Gastrocnemius medialis (tissue), 4 donors: ENCODE measurements at regions of chr12 and their contacts with region 1.

Region 1: GRCh38 chr12:46372544-46373110 is at the start of gene SLC38A2:
- DNase-seq: peak; percentile 97 to 98
- ATAC-seq: peak; percentile 69 to 71
- H3K4me3 ChIP-seq: peak within 1 kb of the TSS; percentile 68 to 87 (median 80)
- H3K27ac ChIP-seq: peak within 1 kb of the TSS; percentile 93 to 97 (median 95)
- H3K4me1 ChIP-seq: peaks cover 38 to 46% of the 10 kb centered on the region in 2 donors
- H3K27me3 ChIP-seq: no peaks in the 10 kb centered on the region
- CTCF ChIP-seq: no peak
- POLR2A ChIP-seq: peak; percentile 100
- total RNA-seq, gene SLC38A2: 260 to 853 (median 400) TPM

Region 2: GRCh38 chr12:45622210-45622937 is 750.3 kb before region 1 on chr12:
- in situ Hi-C with region 1: no loop called
- intact Hi-C with region 1: no loop called
- DNase-seq: no peak
- ATAC-seq: no peak
- H3K4me3 ChIP-seq: no peak overlapping the region
- H3K27ac ChIP-seq: no peak overlapping the region
- H3K4me1 ChIP-seq: no peaks in the 10 kb centered on the region
- H3K27me3 ChIP-seq: no peaks in the 10 kb centered on the region
- CTCF ChIP-seq: no peak
- POLR2A ChIP-seq: no peak

Region 3: DNA sequence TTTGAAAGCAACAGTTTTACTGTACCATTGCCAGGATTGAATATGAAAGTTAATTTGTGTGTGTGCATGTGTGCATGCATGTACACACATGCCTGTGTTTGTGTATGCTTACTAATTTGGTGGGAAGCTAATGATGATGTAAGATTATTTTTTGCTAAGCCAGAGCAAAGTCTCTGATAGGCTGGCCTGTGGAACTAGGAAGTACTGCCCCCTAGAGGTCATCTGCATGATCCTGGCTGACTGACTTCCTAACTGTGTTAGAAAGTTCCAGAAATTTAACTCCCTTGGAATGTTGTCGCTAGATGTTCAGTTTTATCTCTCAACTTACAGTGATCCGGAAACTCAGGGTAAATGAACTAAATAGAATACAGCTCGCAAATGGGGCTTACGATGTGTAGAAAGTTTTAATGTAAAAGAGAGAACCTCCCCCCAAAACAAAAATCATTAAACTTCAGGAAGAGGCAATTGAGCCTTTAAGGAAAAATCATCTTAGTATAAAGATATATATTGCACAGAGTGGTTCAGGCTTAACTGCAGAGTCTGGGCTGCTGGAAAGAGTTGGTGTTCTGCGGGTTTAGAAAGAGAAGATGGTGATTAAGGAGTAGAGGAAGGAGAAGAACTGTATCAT is 69.5 kb before region 1 on chr12:
- in situ Hi-C with region 1: no loop called
- intact Hi-C with region 1: no loop called
- DNase-seq: peak in 1 of 2 donors; percentile 19
- ATAC-seq: peak; percentile 39 to 84
- H3K4me3 ChIP-seq: no peak overlapping the region
- H3K27ac ChIP-seq: no peak overlapping the region
- H3K4me1 ChIP-seq: no peaks in the 10 kb centered on the region
- H3K27me3 ChIP-seq: no peaks in the 10 kb centered on the region
- CTCF ChIP-seq: peak; percentile 44 to 68 (median 51)
- POLR2A ChIP-seq: no peak

Region 4: DNA sequence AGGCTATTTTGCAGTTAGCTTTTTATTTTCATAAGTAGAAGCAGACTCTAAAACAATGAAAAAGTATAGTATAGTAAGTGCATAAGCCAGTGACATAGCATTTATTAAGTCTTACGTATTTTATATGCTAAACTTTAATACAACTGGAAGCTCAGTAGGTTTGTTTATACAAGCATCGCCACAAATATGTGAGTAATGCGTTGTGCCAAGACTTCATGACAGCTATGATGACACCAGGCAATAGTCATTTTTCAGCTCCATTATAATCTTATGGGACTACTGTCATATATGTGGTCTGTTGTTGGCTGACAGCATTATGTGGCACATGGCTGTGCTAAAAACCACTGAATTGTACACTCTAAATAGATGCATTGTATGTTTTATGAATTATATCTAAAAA is 40.4 kb before region 1 on chr12:
- in situ Hi-C with region 1: no loop called
- intact Hi-C with region 1: no loop called
- DNase-seq: no peak
- ATAC-seq: no peak
- H3K4me3 ChIP-seq: no peak overlapping the region
- H3K27ac ChIP-seq: no peak overlapping the region
- H3K4me1 ChIP-seq: no peaks in the 10 kb centered on the region
- H3K27me3 ChIP-seq: no peaks in the 10 kb centered on the region
- CTCF ChIP-seq: no peak
- POLR2A ChIP-seq: no peak

Region 5: GRCh38 chr12:46963977-46964971 is 591.6 kb after region 1 on chr12:
- in situ Hi-C with region 1: no loop called
- intact Hi-C with region 1: loop called (anchors 5 kb)
- DNase-seq: no peak
- ATAC-seq: peak; percentile 21 to 33
- H3K4me3 ChIP-seq: peak overlapping the region; percentile 18 to 29 (median 26)
- H3K27ac ChIP-seq: peak overlapping the region; percentile 76 to 86 (median 78)
- H3K4me1 ChIP-seq: peaks cover 37 to 58% of the 10 kb centered on the region in 2 donors
- H3K27me3 ChIP-seq: no peaks in the 10 kb centered on the region
- CTCF ChIP-seq: no peak
- POLR2A ChIP-seq: no peak